Endothelial cell of umbilical vein (primary cell): ENCODE measurements at regions of chr1 and their contacts with region 1.

Region 1: DNA sequence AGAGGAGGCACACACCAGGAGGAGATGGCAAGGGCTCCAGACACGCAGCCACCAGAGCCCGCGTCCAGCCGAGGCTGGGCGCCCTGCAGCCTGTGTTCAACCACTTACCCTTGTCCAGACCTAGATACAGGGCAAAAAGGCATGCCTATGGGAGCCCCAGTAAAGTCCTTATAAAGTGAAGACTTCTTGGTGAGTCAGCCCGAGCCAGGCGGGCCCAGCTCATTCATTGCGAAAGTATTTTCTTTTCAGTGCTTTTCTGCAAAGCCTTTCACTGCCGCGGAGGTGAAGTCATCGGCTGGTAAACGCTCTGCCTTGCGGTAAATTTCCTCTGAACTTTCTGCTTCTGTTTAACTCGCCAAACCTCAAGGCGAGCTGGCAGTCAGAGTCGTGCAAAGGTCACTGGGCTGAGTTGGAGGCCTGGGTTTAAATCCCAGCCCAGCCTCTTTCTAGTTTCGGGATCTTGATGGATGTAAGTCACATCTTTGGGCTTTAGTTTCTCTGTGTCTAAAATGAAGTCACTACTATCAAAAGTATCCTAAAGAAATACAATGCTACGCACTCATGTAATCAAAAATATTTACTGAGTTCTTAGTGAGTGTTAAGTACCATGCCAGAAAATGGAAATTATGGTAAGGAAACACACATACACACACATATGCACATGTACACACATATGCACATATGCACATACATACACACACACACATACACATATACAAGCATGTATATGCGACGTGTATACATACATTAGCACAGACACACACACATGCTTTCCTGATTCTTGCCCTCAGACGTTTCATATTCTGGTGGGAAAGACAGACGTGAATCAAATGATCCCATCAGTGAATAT is 54.7 kb upstream of the IFFO2 start:
- DNase-seq: peak; percentile 89
- H3K4me3 ChIP-seq: no peak overlapping the region
- H3K27ac ChIP-seq: peak overlapping the region; percentile 84
- H3K4me1 ChIP-seq: peaks cover 31% of the 10 kb centered on the region
- H3K27me3 ChIP-seq: no peaks in the 10 kb centered on the region
- CTCF ChIP-seq: no peak
- POLR2A ChIP-seq: no peak

Region 2: GRCh38 chr1:19081218-19081893 is 70.1 kb after region 1 on chr1:
- CTCF ChIA-PET with region 1: no interaction called
- POLR2A ChIA-PET with region 1: no interaction called
- dilution Hi-C with region 1: no loop called
- intact Hi-C with region 1: loop called (anchors 1 kb)
- DNase-seq: peak; percentile 52
- H3K4me3 ChIP-seq: no peak overlapping the region
- H3K27ac ChIP-seq: peak overlapping the region; percentile 84
- H3K4me1 ChIP-seq: peaks cover 42% of the 10 kb centered on the region
- H3K27me3 ChIP-seq: no peaks in the 10 kb centered on the region
- CTCF ChIP-seq: no peak
- POLR2A ChIP-seq: no peak

Region 3: GRCh38 chr1:19096036-19096833 is 85.0 kb after region 1 on chr1:
- CTCF ChIA-PET with region 1: interaction called, 6 read pairs
- POLR2A ChIA-PET with region 1: no interaction called
- dilution Hi-C with region 1: no loop called
- intact Hi-C with region 1: loop called (anchors 5 kb)
- DNase-seq: peak; percentile 55
- H3K4me3 ChIP-seq: no peak overlapping the region
- H3K27ac ChIP-seq: no peak overlapping the region
- H3K4me1 ChIP-seq: no peaks in the 10 kb centered on the region
- H3K27me3 ChIP-seq: no peaks in the 10 kb centered on the region
- CTCF ChIP-seq: peak; percentile 41 to 68
- POLR2A ChIP-seq: no peak